ENCODE measurements at regions of chr16 and their contacts with region 1.

Region 1: DNA sequence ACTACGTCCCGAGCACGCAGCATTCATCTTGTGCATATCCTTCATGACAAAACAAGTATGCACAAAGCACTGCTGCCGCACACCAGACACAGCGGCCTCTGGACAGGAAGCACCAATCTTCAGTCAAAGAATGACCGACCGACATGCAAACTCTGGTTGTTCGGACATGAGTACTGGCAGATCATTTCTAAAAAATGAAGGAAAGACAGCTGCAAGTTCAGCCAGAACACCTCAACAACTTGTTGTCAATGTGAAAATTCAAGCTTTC is 94.6 kb downstream of the ANKRD11 start:
- DNase-seq: no peak
- ATAC-seq: peak; percentile 8

Region 2: DNA sequence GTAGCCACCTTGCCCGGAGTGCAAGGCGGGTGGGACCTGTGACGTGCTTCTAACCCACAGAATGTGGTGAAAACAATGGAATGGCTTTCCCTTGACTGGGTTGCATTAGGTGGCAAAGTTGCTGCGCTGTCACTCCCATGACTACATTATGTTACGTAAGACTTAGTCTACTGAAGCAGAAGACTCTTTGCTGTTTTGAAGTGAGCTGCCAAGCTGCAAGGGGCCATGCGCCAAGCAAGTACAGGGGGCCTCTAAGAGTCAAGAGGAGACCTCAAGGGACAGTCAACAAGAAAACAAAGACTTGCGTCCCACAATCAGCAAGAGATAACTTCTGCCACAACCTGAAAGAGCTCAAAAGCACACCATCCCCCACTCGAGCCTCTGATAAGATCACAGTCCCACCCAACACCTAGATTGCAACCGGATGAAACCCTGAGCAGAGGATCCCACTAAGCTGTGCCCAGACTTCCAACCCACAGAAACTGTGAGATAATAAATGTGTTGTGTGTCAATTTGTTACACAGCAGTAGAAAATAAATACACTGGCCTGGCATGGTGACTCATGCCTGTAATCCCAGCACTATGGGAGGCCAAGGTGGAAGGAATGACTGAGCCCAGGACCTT is 78.1 kb after region 1 on chr16:
- intact Hi-C with region 1: loop called (anchors 2 kb)
- DNase-seq: no peak
- ATAC-seq: no peak